ENCODE measurements at regions of chr5 and their contacts with region 1.

Region 1: GRCh38 chr5:96614110-96614691 is 48.0 kb upstream of the CAST start:
- DNase-seq: peak; percentile 74
- H3K4me3 ChIP-seq: no peak overlapping the region; the same call in 1 of the 2 replicates
- CTCF ChIP-seq: peak; percentile 24

Region 2: GRCh38 chr5:96601811-96602244 is 12.4 kb before region 1 on chr5:
- CTCF ChIA-PET with region 1: interaction called, 86 read pairs
- POLR2A ChIA-PET with region 1: no interaction called
- DNase-seq: no peak
- H3K4me3 ChIP-seq: no peak overlapping the region
- CTCF ChIP-seq: peak; percentile 62

Region 3: GRCh38 chr5:96687812-96688453 is 73.7 kb after region 1 on chr5:
- CTCF ChIA-PET with region 1: interaction called, 103 read pairs
- POLR2A ChIA-PET with region 1: no interaction called
- DNase-seq: no peak
- H3K4me3 ChIP-seq: no peak overlapping the region
- CTCF ChIP-seq: peak; percentile 45

Region 4: DNA sequence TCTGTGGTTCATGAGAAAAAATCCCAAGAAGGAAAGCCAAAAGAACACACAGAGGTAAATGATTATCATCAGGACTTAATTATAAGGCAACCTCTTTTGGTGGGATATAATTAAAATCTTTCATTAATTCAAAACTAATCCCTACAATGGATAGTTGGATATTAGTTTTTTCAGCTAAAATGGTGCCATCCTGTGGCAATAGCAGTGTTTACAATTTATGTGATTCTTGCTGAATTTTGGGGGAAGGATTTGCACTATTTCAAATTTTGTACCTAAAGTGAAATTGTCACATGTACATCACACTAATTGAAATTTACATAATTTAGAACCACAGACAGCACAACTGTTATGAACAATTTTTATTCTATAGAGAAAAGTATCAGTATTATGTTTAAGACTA is 115.0 kb after region 1 on chr5:
- CTCF ChIA-PET with region 1: interaction called, 68 read pairs
- POLR2A ChIA-PET with region 1: interaction called, 3 read pairs
- DNase-seq: no peak
- H3K4me3 ChIP-seq: no peak overlapping the region
- CTCF ChIP-seq: peak; percentile 18

Region 5: GRCh38 chr5:96743065-96743768 is 129.0 kb after region 1 on chr5:
- CTCF ChIA-PET with region 1: interaction called, 11 read pairs
- POLR2A ChIA-PET with region 1: no interaction called
- DNase-seq: no peak
- H3K4me3 ChIP-seq: no peak overlapping the region
- CTCF ChIP-seq: no peak

Measured in AG04449 (cell line).